Posterior vena cava (tissue), 2 donors: ENCODE measurements at regions of chr5 and their contacts with region 1.

Region 1: DNA sequence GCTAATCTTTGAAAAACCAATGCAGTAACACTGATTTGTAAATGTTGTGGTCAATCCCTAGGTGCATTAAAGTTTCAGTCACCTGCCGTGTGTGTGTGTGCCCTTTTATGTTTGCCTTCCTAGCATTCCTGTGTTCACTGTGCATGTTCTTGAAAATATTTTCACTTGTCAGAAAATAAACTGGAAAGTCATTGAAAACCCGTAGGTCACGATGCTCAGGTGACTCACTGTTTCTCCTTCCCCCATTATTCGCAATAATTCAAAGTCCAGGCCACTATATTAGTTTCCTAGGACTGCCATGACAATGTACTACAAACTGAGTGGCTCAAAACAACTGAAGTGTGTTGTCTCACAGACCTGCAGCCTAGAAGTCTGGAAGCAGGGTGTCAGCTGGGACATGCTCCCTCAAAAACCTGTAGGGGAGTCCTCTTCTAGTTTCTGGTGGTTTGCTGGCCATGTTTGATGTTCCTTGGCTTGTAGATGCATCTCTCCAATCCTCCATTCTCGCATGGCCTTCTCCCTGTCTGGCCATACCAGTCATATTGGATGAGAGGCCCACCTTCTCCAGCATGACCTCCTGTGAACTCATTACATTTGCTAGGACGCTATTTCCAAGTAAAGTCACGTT is 29.3 kb downstream of the MARVELD2 start:
- DNase-seq: no peak

Region 2: GRCh38 chr5:69454460-69455249 is 10.4 kb after region 1 on chr5:
- intact Hi-C with region 1: loop called in 1 of 2 experiments (anchors 2 kb)
- DNase-seq: no peak